ENCODE measurements at regions of chr2 and their contacts with region 1.

Region 1: GRCh38 chr2:196798980-196799379 is 503 bp downstream of the GTF3C3 start:
- DNase-seq: no peak
- H3K4me3 ChIP-seq: peak overlapping the region; percentile 62 to 69
- H3K27ac ChIP-seq: peak overlapping the region; percentile 74 to 75
- H3K4me1 ChIP-seq: peaks cover 0 to 30% (median 16%) of the 10 kb centered on the region in 4 donors
- H3K27me3 ChIP-seq: peaks cover 0 to 9% of the 10 kb centered on the region in 2 donors
- CTCF ChIP-seq: no peak

Region 2: DNA sequence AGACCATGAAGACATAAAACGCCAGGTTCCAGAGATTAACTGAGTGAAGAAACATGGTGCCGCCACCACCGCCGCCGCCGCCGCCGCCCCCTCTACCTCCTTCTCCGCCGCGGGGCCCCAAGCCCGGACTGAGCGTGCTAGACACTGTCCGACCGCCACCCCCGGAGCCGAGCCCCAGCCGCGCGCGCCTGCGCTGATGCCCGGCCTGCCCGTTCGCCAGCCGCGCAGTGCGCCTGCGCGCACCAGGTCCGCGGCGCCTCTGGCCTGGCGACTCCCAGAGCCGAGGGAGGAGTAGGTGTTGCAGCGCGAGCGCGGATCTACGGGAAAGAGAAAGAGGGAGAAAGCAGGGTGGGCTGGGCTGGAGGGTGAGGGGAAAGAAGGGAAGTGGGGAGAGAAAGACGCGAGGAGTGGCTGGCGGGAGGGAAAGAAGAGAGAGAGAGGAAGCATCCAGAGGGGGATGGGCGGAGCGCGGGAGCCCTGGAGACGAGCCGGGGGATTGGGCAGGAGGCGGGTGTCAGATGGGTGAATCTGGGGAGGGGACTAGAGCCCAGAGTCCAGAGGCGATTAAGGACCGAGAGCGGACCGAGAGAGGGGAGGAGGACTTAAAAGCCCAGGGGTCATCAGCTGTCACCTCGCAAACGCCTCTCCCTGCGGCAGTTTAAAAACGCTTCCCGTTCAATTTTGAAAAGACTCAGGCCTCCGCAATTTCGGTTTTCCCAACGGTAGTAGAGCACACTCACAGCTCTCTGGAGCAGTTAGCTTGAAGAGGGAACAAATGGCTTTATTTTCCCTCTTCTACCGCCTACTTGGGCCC is 127.8 kb after region 1 on chr2 and contains the start of gene PGAP1:
- intact Hi-C with region 1: loop called (anchors 5 kb)
- DNase-seq: peak; percentile 83 to 93
- H3K4me3 ChIP-seq: peak within 1 kb of the TSS; percentile 80 to 88
- H3K27ac ChIP-seq: peak within 1 kb of the TSS; percentile 83 to 94
- H3K4me1 ChIP-seq: peaks cover 0 to 20% (median 4%) of the 10 kb centered on the region in 4 donors
- H3K27me3 ChIP-seq: no peaks in the 10 kb centered on the region
- CTCF ChIP-seq: no peak

Region 3: GRCh38 chr2:197399887-197400540 is 601.0 kb after region 1 on chr2:
- intact Hi-C with region 1: loop called (anchors 10 kb)
- DNase-seq: no peak
- H3K4me3 ChIP-seq: no peak overlapping the region
- H3K27ac ChIP-seq: no peak overlapping the region
- H3K4me1 ChIP-seq: no peaks in the 10 kb centered on the region
- H3K27me3 ChIP-seq: no peaks in the 10 kb centered on the region
- CTCF ChIP-seq: no peak

Measured in tibial artery (tissue), 4 donors.